Posterior vena cava (tissue), 2 donors: ENCODE measurements at regions of chr20 and their contacts with region 1.

Region 1: GRCh38 chr20:50133474-50134217 is 19.9 kb downstream of the PEDS1 start:
- DNase-seq: no peak

Region 2: GRCh38 chr20:50012282-50013263 is 121.1 kb before region 1 on chr20:
- intact Hi-C with region 1: no loop called
- DNase-seq: no peak

Region 3: GRCh38 chr20:50165684-50166554 is 32.3 kb after region 1 on chr20:
- intact Hi-C with region 1: loop called in 1 of 2 experiments (anchors 5 kb)
- DNase-seq: peak; percentile 98

Region 4: GRCh38 chr20:50788078-50788991 is 654.7 kb after region 1 on chr20:
- intact Hi-C with region 1: no loop called
- DNase-seq: peak; percentile 46